ENCODE measurements at regions of chr6 and their contacts with region 1.

Region 1: GRCh38 chr6:89242574-89243330 is 25.6 kb upstream of the GABRR1 start:
- DNase-seq: no peak
- ATAC-seq: peak; percentile 77 to 92 (median 86)
- H3K4me3 ChIP-seq: no peak overlapping the region
- H3K27ac ChIP-seq: no peak overlapping the region
- H3K4me1 ChIP-seq: no peaks in the 10 kb centered on the region
- H3K27me3 ChIP-seq: no peaks in the 10 kb centered on the region
- CTCF ChIP-seq: peak; percentile 40 to 59 (median 50)
- POLR2A ChIP-seq: no peak

Region 2: GRCh38 chr6:88975369-88975768 is 267.4 kb before region 1 on chr6:
- intact Hi-C with region 1: loop called in 1 of 2 experiments (anchors 10 kb)
- DNase-seq: no peak
- ATAC-seq: no peak
- H3K4me3 ChIP-seq: no peak overlapping the region
- H3K27ac ChIP-seq: no peak overlapping the region
- H3K4me1 ChIP-seq: no peaks in the 10 kb centered on the region
- H3K27me3 ChIP-seq: no peaks in the 10 kb centered on the region
- CTCF ChIP-seq: no peak
- POLR2A ChIP-seq: no peak

Region 3: GRCh38 chr6:89117211-89118108 is 125.3 kb before region 1 on chr6 and contains the start of gene SRSF12:
- intact Hi-C with region 1: loop called in 1 of 2 experiments (anchors 10 kb)
- DNase-seq: peak; percentile 56 to 65 (median 64)
- ATAC-seq: peak; percentile 72 to 93 (median 90)
- H3K4me3 ChIP-seq: peak within 1 kb of the TSS; percentile 50 to 61 (median 61)
- H3K27ac ChIP-seq: peak within 1 kb of the TSS in 1 of 3 donors; percentile 4
- H3K4me1 ChIP-seq: no peaks in the 10 kb centered on the region
- H3K27me3 ChIP-seq: no peaks in the 10 kb centered on the region
- CTCF ChIP-seq: no peak
- POLR2A ChIP-seq: no peak
- total RNA-seq, gene SRSF12: 0.22 to 0.78 (median 0.40) TPM in 4 of 6 experiments, not detected in the others